Activated CD4-positive, alpha-beta T cell treated with anti-CD3 and anti-CD28 coated beads for 36 hours (primary cell): ENCODE measurements at regions of chr15 and their contacts with region 1.

Region 1: DNA sequence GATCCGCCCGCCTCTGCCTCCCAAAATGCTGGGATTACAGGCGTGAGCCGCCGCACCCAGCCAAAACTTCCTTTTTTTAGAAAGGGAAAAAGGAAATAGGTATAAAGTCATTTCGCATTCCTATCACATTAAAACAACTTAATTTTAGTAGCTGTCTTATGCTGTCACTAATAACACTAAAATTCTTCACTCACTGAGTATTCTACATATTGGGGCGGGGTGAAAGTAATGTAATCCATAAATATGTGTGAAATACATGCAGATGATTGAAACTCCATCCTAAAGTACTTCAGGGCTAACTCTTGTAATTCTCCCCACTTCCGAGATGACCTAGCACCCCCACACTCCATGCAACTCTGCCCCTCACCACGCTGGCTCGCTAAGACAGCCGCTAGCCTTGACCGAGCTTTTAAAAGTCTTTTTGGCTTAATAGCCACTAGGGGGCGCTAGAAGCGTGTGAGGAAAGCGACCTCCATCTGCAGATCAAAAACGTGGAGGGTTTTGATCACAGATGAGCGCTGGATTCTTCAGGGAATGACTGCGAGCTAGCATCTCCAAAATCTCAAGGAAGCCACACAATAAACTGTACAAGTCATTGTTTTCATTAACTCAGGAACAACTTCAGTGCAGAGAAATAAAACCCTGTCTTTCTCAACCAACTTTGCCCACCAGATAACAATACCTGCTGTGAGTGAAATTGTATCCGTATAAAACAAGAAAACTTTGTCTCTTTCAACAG is 129.3 kb upstream of the IGF1R start:
- DNase-seq: peak; percentile 70
- ATAC-seq: peak; percentile 85
- H3K4me3 Mint-ChIP-seq: no peak overlapping the region
- H3K27ac Mint-ChIP-seq: no peak overlapping the region
- H3K4me1 Mint-ChIP-seq: no peaks in the 10 kb centered on the region
- H3K27me3 Mint-ChIP-seq: peaks cover 3% of the 10 kb centered on the region

Region 2: GRCh38 chr15:98530570-98530969 is 11.6 kb after region 1 on chr15:
- CTCF ChIA-PET with region 1: interaction called, 18 read pairs
- POLR2A ChIA-PET with region 1: no interaction called
- intact Hi-C with region 1: no loop called
- DNase-seq: peak; percentile 47
- ATAC-seq: peak; percentile 90
- H3K4me3 Mint-ChIP-seq: no peak overlapping the region
- H3K27ac Mint-ChIP-seq: no peak overlapping the region
- H3K4me1 Mint-ChIP-seq: peaks cover 4% of the 10 kb centered on the region
- H3K27me3 Mint-ChIP-seq: peaks cover 17% of the 10 kb centered on the region

Region 3: DNA sequence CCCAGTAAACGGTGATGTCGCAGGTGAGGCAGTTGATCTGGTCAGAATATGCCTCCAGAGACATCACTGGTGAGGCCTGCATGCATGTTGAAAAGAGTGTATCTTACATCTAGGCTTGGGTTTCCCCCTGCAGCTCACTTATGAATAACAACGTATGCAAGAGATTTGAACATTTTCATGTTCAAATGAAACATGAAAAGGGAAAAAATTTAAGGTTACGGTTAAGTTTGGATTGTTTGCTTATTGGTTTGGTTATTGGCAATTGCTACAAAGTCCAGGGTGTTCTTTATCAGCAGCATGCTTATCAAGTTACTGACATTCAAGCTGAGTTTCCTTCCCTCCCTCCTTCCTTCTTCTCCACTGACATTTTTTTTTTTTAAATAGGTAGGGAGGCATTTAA is 252.5 kb after region 1 on chr15:
- CTCF ChIA-PET with region 1: interaction called, 3 read pairs
- POLR2A ChIA-PET with region 1: no interaction called
- intact Hi-C with region 1: loop called (anchors 5 kb)
- DNase-seq: peak; percentile 20
- ATAC-seq: peak; percentile 60
- H3K4me3 Mint-ChIP-seq: no peak overlapping the region
- H3K27ac Mint-ChIP-seq: no peak overlapping the region
- H3K4me1 Mint-ChIP-seq: peaks cover 50% of the 10 kb centered on the region
- H3K27me3 Mint-ChIP-seq: no peaks in the 10 kb centered on the region

Region 4: DNA sequence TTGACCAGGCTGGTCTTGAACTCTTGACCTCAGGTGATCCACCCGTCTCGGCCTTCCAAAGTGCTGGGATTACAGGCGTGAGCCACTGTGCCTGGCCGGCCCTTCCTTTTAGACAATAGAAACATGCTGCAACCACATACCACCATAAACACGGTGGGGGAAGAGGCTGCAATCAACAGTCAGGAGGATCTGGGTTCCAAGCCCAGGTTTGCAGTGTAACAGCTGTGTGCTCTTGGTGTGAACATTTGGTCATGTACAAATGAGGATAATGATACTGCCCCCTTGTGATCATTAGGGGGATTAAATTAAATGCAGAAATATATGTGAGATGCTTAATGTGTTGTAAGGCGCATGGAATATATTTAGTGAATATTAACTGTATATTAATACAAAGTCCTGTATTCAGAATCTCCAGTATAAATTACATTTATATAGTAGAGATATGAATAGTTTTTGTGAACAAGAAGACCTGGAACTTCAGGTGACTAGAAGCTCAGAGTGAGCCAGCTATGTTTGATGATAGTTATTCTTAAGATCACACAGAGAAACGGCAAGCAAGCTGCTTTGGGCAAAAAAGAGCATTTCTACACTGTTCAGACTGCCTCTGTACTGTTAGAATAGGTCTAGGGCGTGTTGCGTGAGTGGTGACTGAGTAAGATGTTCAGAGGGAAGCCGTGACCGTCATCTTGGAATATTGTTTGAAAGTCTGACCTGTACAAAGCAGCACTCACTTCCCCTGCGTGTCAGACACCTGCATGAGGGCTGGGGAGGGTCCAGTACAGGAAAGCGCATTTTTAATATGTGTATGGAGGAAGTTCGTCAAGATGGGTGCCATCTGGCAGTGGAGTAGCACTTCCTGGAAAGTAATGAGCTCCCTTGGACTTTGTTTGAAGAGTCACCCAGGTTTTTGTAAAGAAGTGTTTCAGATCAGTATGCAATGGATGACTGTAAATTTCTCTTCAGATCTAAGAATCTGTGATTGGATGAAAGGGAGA is 362.8 kb after region 1 on chr15:
- CTCF ChIA-PET with region 1: interaction called, 21 read pairs
- POLR2A ChIA-PET with region 1: no interaction called
- intact Hi-C with region 1: loop called in 1 of 2 experiments (anchors 10 kb)
- DNase-seq: peak; percentile 16
- ATAC-seq: peak; percentile 72
- H3K4me3 Mint-ChIP-seq: no peak overlapping the region
- H3K27ac Mint-ChIP-seq: no peak overlapping the region
- H3K4me1 Mint-ChIP-seq: peaks cover 9% of the 10 kb centered on the region
- H3K27me3 Mint-ChIP-seq: no peaks in the 10 kb centered on the region

Region 5: GRCh38 chr15:99059010-99059981 is 540.3 kb after region 1 on chr15:
- CTCF ChIA-PET with region 1: interaction called, 4 read pairs
- POLR2A ChIA-PET with region 1: no interaction called
- intact Hi-C with region 1: loop called in 1 of 2 experiments (anchors 5 kb)
- DNase-seq: peak; percentile 72
- ATAC-seq: peak; percentile 92
- H3K4me3 Mint-ChIP-seq: peak overlapping the region; percentile 53
- H3K27ac Mint-ChIP-seq: peak overlapping the region; percentile 60
- H3K4me1 Mint-ChIP-seq: peaks cover 6% of the 10 kb centered on the region
- H3K27me3 Mint-ChIP-seq: peaks cover 29% of the 10 kb centered on the region